BJ (cell line): ENCODE measurements at regions of chr1 and their contacts with region 1.

Region 1: DNA sequence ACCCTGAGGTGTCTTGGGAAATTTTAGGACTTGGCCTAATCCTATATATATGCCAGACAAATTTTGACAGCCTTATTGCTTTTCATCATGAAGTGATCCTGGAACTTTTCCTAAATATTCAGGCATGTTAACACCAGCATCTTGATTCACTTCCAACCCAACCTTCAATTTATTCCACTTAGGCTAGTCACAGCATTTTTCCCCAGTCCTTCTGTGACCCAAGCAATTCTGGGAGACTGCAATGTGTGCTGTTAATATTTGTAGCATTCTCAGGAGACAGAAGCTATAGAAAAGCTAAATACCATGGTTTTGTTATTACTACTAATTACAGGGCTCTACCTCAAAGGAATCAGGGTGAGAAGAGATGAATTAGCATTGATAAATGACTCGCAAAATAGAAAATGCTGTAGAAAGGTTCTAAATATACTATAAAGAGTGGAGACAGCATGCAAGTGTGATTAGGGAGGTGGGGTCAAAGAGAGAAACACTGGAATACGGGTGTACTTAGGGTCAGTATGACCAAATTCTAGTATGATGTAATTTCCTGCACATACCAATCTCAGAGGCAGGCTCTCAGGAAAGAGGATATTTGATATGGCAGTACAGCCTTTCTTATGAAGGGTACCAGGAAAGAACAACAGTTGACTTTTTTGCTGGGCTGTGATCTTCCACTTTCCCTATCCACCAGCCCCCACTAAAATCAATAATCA is 29.1 kb downstream of the PRRX1 start:
- DNase-seq: no peak
- H3K4me3 ChIP-seq: no peak overlapping the region
- H3K27me3 ChIP-seq: no peaks in the 10 kb centered on the region
- CTCF ChIP-seq: no peak

Region 2: GRCh38 chr1:170567214-170567613 is 125.8 kb before region 1 on chr1:
- CTCF ChIA-PET with region 1: no interaction called
- POLR2A ChIA-PET with region 1: no interaction called
- DNase-seq: no peak
- H3K4me3 ChIP-seq: no peak overlapping the region
- H3K27me3 ChIP-seq: no peaks in the 10 kb centered on the region
- CTCF ChIP-seq: no peak

Region 3: DNA sequence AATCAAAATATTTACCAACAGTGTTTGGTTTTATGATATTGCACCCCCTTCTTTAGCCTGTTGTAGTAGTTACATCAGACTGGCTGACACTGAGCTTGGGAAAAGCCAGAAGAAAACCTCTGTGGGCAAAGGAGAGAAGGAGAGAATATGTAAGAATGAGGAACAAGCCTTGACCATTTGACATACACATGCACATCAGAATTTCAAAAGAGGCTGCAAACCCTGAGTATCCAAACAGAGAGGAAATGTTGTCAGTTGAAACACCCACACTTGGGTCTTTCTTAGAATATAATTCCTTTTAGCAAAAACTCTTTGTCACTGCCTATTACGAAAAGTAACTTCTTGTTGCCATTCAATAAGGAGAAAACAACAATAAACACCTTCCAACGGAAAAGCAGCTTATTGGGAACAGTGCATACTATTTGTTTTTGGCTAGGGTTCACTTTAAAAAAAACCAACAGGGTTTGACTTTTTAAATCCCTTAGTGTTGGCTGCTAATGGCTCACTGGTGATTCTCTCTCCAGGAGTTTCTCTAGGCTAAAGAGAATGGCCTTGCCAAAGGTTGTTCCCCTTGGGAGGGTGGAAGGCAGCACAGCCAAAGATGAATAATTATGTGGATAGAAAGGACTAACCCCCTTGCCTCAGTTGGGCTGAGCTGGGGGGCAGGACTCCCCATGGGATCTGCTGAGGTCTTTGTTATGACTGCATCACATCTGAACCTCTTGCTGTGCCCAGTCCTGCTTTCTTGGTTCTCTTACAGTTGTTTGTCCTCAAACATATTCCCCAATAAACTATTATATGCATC is 112.2 kb before region 1 on chr1:
- CTCF ChIA-PET with region 1: no interaction called
- POLR2A ChIA-PET with region 1: no interaction called
- DNase-seq: no peak
- H3K4me3 ChIP-seq: no peak overlapping the region
- H3K27me3 ChIP-seq: no peaks in the 10 kb centered on the region
- CTCF ChIP-seq: no peak

Region 4: DNA sequence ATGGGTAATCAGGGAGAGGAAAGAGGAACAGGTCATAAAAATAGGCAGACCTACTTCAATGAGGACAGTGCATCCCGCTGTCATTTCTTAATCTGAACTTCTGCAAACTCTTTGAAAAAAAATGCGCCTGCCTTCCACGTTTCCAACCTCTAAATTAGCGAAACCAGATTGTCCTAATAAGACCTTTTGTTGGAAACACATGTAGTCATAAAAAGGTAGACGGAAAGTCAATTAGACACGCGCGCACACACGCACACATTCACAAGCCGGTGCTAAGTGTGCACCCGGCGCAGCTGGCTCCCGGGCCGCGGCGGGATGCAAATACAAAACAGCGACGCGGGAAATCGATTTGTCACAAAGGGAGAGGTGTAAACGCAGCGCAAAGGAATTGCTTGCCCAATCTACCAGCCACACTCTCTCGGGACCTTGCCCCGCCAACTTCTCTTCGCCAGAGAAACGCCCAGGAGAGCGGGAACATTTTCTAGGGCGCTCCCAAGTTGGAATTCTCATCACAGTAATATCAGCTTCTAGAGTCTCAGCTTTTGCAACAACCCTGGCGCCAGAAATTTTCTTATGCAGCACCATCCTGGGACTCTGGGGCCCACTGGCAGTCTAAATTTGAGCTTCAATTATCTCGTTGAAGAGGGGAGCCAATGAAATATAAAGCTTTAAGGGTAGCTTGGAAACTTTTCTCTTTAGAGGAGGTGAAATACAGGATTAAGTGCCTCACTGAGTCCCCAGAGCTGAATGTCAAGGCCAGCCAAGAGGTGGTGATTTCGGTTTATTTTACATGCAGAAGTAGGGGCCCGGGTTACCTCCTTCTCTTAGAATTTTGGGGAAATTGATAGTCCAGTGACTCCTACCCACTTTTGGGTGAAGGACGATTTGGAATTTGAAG is 24.6 kb before region 1 on chr1:
- CTCF ChIA-PET with region 1: interaction called, 16 read pairs
- POLR2A ChIA-PET with region 1: no interaction called
- DNase-seq: no peak
- H3K4me3 ChIP-seq: peak overlapping the region; percentile 27
- H3K27me3 ChIP-seq: no peaks in the 10 kb centered on the region
- CTCF ChIP-seq: no peak

Region 5: DNA sequence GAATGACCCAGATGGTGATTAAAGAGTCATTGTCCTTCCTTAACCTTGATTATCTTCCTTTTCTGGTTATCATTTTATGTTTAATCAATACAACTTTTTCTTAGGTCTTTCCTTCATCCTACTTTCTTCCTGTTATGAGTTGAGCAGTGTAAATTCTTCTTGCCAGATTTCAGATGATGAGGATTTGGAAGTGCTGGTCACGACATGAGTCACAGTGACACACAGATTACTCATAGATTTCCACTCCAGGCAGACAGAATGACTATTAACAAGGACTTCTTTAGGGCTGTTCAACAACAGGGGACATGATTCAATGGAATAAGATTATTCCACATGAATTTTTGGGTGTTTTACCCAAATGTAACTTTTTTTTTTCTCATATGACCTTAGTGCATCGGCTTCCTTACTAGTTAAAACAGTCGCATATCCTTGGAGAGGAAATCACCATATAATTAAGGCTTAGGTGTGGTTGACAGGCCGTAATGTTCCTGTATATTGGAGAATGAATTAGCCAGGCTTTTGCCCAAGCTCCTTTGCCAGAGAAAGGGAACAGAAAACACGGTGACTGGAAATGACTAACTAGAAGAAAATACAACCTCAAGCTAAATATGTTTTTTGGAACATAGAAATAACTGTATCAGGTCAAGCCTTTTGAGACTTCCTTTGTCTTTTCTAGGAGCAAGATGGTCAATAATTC is 15.1 kb after region 1 on chr1:
- CTCF ChIA-PET with region 1: interaction called, 15 read pairs
- POLR2A ChIA-PET with region 1: interaction called, 3 read pairs
- DNase-seq: peak; percentile 98
- H3K4me3 ChIP-seq: no peak overlapping the region
- H3K27me3 ChIP-seq: no peaks in the 10 kb centered on the region
- CTCF ChIP-seq: no peak